Panc1 (cell line): ENCODE measurements at regions of chr15 and their contacts with region 1.

Region 1: GRCh38 chr15:86915811-86916331 is 836.2 kb downstream of the AGBL1 start:
- DNase-seq: no peak
- ATAC-seq: peak; percentile 71; the same call in 1 of the 2 replicates
- H3K4me3 ChIP-seq: no peak overlapping the region
- H3K27ac ChIP-seq: no peak overlapping the region
- H3K4me1 ChIP-seq: no peaks in the 10 kb centered on the region
- H3K27me3 ChIP-seq: peaks cover 9% of the 10 kb centered on the region
- CTCF ChIP-seq: peak; percentile 69

Region 2: GRCh38 chr15:86935841-86936240 is 20.0 kb after region 1 on chr15:
- CTCF ChIA-PET with region 1: no interaction called
- POLR2A ChIA-PET with region 1: no interaction called
- in situ Hi-C with region 1: no loop called
- intact Hi-C with region 1: no loop called
- DNase-seq: no peak
- ATAC-seq: no peak
- H3K4me3 ChIP-seq: no peak overlapping the region
- H3K27ac ChIP-seq: no peak overlapping the region
- H3K4me1 ChIP-seq: no peaks in the 10 kb centered on the region
- H3K27me3 ChIP-seq: no peaks in the 10 kb centered on the region
- CTCF ChIP-seq: no peak

Region 3: DNA sequence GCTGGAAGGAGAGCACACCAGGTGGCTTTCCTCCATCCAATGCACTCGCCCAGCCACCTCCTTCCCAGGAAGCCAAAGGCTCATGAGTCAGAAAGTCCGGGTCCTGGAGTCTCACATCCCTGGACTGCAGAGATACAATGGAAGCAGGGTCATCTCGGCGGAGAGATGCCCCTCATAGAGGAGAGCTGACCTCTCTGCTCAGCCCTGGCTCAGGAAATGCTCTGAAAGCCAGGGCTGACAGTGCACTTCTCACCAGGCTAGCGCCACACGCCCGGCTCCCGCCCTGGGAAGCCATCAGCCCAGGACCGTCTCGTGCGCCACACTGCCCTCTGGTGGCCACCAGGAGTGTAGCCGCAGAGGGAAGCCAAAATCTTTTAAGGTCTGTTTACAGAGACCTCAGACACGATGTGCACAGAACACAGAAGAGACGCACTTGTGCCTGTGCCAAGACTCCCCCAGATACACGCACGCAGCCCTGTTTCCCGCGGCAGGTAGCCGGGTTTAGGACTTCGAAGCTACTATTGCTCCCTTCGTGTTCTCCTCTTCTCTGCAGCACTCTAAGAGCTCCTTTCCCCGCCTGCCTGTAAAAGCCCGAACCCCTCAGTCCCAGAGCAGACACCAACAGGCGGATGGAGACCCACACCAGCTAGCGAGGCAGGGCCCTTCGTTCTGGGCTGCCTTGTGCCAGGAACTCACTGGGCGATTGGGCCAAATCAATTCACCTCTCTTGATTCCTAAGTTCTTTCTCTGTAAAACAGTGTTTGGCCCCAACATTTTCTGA is 1331.0 kb after region 1 on chr15:
- CTCF ChIA-PET with region 1: no interaction called
- POLR2A ChIA-PET with region 1: no interaction called
- in situ Hi-C with region 1: no loop called
- intact Hi-C with region 1: loop called (anchors 10 kb)
- DNase-seq: peak; percentile 39
- ATAC-seq: peak; percentile 92
- H3K4me3 ChIP-seq: peak overlapping the region in 1 of 2 experiments; percentile 18; a peak in 1 of 4 replicates
- H3K27ac ChIP-seq: no peak overlapping the region
- H3K4me1 ChIP-seq: no peaks in the 10 kb centered on the region
- H3K27me3 ChIP-seq: peaks cover 2% of the 10 kb centered on the region; the same call in 1 of the 2 replicates
- CTCF ChIP-seq: peak; percentile 96